ENCODE measurements at regions of chr12 and their contacts with region 1.

Region 1: DNA sequence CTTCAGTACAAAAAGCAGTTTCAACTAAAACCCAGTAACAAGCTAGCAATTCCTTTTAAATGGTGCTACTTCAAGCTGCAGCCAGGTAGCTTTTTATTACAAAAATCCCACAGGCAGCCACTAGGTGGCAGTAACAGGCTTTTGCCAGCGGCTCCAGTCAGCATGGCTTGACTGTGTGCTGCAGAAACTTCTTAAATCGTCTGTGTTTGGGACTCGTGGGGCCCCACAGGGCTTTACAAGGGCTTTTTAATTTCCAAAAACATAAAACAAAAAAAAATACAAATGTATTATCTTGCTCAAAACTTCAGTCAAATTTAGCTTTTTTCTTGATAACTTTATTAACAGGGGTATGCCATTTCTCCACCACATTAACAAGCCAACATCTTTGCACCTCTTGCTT is 3.6 kb upstream of the CLEC4E start:
- DNase-seq: peak; percentile 80
- H3K4me3 Mint-ChIP-seq: no peak overlapping the region
- H3K27ac Mint-ChIP-seq: no peak overlapping the region
- H3K4me1 Mint-ChIP-seq: peaks cover 9% of the 10 kb centered on the region
- H3K27me3 Mint-ChIP-seq: peaks cover 19% of the 10 kb centered on the region

Region 2: DNA sequence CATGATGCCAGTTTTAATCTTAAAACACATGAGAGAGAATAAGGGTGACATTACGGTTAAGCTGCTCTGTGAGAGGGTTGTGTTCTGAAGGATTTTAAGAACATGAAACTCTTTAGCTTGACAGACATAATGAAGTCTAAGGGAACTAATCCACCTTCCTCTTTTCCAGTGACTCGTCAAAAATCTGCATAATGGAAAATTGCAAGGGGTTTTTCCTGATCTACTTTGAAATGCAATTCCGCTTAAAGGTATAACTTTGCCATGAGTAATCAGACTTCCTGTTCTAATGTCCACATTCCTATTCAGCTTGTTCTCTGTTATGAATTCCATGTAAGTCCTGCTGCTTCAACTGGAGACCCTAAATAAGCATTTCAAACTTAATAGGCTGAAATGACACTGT is 387.4 kb before region 1 on chr12 and contains the start of gene ZNF705A:
- CTCF ChIA-PET with region 1: no interaction called
- POLR2A ChIA-PET with region 1: no interaction called
- intact Hi-C with region 1: no loop called
- DNase-seq: no peak
- H3K4me3 Mint-ChIP-seq: no peak within 1 kb of the TSS
- H3K27ac Mint-ChIP-seq: no peak within 1 kb of the TSS
- H3K4me1 Mint-ChIP-seq: peaks cover 26% of the 10 kb centered on the region
- H3K27me3 Mint-ChIP-seq: peaks cover 7% of the 10 kb centered on the region
- total RNA-seq, gene ZNF705A: not detected

Region 3: GRCh38 chr12:8226355-8226754 is 317.9 kb before region 1 on chr12:
- CTCF ChIA-PET with region 1: no interaction called
- POLR2A ChIA-PET with region 1: no interaction called
- intact Hi-C with region 1: no loop called
- DNase-seq: no peak
- H3K4me3 Mint-ChIP-seq: no peak overlapping the region
- H3K27ac Mint-ChIP-seq: no peak overlapping the region
- H3K4me1 Mint-ChIP-seq: peaks cover 2% of the 10 kb centered on the region
- H3K27me3 Mint-ChIP-seq: peaks cover 4% of the 10 kb centered on the region

Region 4: GRCh38 chr12:8501720-8502119 is 42.6 kb before region 1 on chr12:
- CTCF ChIA-PET with region 1: interaction called, 11 read pairs
- POLR2A ChIA-PET with region 1: no interaction called
- intact Hi-C with region 1: no loop called
- DNase-seq: no peak
- H3K4me3 Mint-ChIP-seq: no peak overlapping the region
- H3K27ac Mint-ChIP-seq: no peak overlapping the region
- H3K4me1 Mint-ChIP-seq: peaks cover 4% of the 10 kb centered on the region
- H3K27me3 Mint-ChIP-seq: peaks cover 6% of the 10 kb centered on the region

Region 5: GRCh38 chr12:8527250-8528130 is 16.8 kb before region 1 on chr12:
- CTCF ChIA-PET with region 1: interaction called, 42 read pairs
- POLR2A ChIA-PET with region 1: no interaction called
- intact Hi-C with region 1: no loop called
- DNase-seq: no peak
- H3K4me3 Mint-ChIP-seq: no peak overlapping the region
- H3K27ac Mint-ChIP-seq: no peak overlapping the region
- H3K4me1 Mint-ChIP-seq: no peaks in the 10 kb centered on the region
- H3K27me3 Mint-ChIP-seq: peaks cover 30% of the 10 kb centered on the region

Region 6: GRCh38 chr12:8577879-8578278 is 33.6 kb after region 1 on chr12:
- CTCF ChIA-PET with region 1: interaction called, 12 read pairs
- POLR2A ChIA-PET with region 1: no interaction called
- intact Hi-C with region 1: no loop called
- DNase-seq: no peak
- H3K4me3 Mint-ChIP-seq: no peak overlapping the region
- H3K27ac Mint-ChIP-seq: no peak overlapping the region
- H3K4me1 Mint-ChIP-seq: peaks cover 2% of the 10 kb centered on the region
- H3K27me3 Mint-ChIP-seq: peaks cover 2% of the 10 kb centered on the region

Region 7: DNA sequence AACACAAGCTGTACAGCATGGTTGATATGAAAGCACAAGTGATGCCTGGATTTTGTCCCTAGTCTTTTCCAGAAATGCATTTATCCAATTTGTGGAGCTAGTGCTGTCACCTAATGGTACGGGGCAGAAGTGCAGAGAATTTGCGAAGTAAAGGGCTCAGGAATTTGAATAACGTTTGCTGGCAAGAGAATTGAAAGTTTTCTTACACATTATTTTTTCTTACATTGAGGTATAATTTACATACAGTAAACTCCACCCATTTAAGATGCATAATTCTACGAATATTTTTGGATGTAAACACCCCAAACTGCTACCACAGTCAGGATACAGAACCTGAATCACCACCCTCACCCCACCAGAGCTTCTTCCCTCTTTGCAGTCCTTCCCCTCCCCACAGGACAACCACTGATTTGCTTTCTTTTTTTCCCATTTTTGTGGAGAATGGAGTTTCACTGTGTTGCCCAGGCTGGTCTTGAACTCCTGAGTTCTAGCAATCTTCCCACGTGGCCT is 64.8 kb after region 1 on chr12:
- CTCF ChIA-PET with region 1: interaction called, 60 read pairs
- POLR2A ChIA-PET with region 1: no interaction called
- intact Hi-C with region 1: loop called (anchors 1 kb)
- DNase-seq: peak; percentile 18
- H3K4me3 Mint-ChIP-seq: no peak overlapping the region
- H3K27ac Mint-ChIP-seq: no peak overlapping the region
- H3K4me1 Mint-ChIP-seq: peaks cover 14% of the 10 kb centered on the region
- H3K27me3 Mint-ChIP-seq: peaks cover 7% of the 10 kb centered on the region

Region 8: GRCh38 chr12:8780389-8780788 is 236.1 kb after region 1 on chr12:
- CTCF ChIA-PET with region 1: no interaction called
- POLR2A ChIA-PET with region 1: no interaction called
- intact Hi-C with region 1: no loop called
- DNase-seq: no peak
- H3K4me3 Mint-ChIP-seq: no peak overlapping the region
- H3K27ac Mint-ChIP-seq: no peak overlapping the region
- H3K4me1 Mint-ChIP-seq: no peaks in the 10 kb centered on the region
- H3K27me3 Mint-ChIP-seq: no peaks in the 10 kb centered on the region

Region 9: DNA sequence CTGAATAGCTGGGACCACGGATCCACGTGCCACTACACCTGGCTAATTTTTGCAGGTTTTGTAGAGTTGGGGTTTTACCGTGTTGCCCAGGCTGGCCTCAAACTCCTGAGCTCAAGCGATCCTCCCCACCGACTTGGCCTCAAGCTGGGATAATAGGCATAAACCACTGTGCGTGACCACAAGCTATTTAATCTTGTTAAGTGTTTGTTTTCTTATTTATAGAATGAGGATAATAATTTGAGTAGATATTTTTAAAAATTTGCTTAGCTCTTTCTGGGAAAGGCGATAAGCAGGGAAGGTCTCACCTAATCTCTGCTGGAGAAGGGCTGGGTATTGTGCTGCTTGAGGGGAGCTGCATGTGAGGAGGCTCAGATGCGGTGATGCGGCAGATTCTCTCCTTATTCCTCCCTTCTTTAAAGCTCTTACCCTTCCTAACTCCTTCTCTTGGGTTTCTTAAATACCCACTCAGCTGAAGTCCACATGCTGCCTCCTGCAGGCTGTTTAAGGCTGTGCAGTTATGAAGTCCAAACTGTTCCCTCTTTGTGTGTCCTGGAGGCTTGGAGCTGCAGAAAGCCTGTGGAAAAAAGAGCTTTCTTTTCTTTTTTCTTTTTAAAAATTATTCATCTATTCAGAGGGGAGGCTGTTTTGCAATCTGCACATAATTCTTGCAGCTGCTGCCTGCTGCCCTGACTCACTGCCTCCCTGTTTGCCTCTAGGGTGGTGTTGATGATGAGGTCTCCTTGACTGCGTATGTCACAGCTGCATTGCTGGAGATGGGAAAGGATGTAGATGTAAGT is 316.1 kb after region 1 on chr12:
- CTCF ChIA-PET with region 1: interaction called, 14 read pairs
- POLR2A ChIA-PET with region 1: no interaction called
- intact Hi-C with region 1: no loop called
- DNase-seq: peak; percentile 46
- H3K4me3 Mint-ChIP-seq: no peak overlapping the region
- H3K27ac Mint-ChIP-seq: no peak overlapping the region
- H3K4me1 Mint-ChIP-seq: no peaks in the 10 kb centered on the region
- H3K27me3 Mint-ChIP-seq: no peaks in the 10 kb centered on the region